ENCODE measurements at regions of chr7 and their contacts with region 1.

Region 1: DNA sequence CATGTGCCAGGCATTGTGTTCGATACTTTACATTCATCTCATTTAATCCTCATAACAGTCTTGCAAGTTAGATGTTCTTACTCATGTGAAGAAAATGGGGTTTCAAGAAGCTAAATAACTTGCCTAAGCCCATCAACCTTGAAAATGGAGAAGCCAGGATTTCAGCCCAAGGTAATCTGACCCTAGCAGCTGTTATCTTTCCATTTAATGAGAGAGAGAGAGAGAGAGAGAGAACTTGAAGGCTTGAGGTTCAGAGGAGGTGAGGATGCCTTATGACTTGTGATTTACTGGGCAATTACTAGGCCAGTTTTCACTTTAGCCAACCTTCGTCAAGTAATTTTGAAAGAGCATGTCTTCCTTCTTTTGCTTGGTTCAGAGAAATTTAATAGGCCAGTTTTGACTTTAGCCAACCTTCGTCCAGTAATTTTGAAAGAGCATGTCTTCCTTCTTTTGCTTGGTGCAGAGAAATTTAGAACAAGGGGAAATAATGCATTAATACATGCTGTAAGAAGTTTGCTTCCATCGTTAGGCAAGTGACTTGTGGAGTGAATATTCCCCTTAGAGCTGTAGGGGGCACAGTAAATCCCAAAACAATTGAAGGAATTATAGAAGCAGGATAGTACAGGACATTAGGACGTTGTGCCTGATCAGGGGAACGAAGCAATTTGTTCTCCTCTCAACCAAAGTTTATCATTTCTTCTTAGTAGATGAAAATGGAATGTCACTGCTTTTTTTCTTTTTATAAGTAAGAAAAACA is 143.0 kb upstream of the BMPER start:
- DNase-seq: no peak

Region 2: GRCh38 chr7:33895025-33895804 is 132.9 kb after region 1 on chr7:
- CTCF ChIA-PET with region 1: interaction called, 13 read pairs
- POLR2A ChIA-PET with region 1: no interaction called
- DNase-seq: peak; percentile 80

Region 3: DNA sequence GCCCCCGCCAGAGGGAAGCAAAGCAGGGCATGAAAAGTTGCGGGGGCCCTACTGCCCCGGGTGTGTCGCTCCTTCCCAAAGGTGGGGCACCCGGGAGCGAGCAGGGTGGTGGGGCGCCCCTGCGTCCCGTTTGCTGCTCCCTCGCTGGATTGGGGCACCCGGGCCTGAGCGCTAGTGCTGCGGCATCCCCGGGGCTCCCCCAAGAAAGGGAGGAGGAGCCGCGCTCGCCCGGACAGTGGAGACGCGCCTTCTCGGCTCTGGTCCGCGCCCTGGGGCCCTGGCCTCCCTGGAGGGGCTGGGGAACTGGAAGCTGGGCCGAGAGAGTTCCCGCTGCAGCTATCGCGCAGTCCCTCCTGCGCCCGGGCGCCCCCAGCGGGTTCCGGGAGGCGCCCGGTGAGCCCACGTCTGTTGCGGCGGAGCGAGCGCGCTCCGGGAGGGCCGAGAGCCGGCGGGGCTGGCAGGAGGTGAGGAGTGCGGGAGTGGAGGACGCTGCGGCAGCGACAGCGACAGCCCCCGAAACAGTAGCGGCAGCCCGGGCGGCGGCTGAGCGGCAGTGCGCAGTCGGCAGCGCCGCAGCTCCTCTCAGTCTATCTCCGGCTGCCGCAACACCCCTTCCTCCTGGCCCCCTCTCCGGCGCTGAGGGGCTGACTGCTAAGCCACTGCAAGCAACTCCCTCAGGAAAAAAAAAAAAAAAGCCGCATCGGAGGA is 142.5 kb after region 1 on chr7:
- CTCF ChIA-PET with region 1: no interaction called
- POLR2A ChIA-PET with region 1: interaction called, 13 read pairs
- DNase-seq: peak; percentile 50

Measured in HEK293T (cell line).